Breast epithelium (tissue), 4 donors: ENCODE measurements at regions of chr9 and their contacts with region 1.

Region 1: DNA sequence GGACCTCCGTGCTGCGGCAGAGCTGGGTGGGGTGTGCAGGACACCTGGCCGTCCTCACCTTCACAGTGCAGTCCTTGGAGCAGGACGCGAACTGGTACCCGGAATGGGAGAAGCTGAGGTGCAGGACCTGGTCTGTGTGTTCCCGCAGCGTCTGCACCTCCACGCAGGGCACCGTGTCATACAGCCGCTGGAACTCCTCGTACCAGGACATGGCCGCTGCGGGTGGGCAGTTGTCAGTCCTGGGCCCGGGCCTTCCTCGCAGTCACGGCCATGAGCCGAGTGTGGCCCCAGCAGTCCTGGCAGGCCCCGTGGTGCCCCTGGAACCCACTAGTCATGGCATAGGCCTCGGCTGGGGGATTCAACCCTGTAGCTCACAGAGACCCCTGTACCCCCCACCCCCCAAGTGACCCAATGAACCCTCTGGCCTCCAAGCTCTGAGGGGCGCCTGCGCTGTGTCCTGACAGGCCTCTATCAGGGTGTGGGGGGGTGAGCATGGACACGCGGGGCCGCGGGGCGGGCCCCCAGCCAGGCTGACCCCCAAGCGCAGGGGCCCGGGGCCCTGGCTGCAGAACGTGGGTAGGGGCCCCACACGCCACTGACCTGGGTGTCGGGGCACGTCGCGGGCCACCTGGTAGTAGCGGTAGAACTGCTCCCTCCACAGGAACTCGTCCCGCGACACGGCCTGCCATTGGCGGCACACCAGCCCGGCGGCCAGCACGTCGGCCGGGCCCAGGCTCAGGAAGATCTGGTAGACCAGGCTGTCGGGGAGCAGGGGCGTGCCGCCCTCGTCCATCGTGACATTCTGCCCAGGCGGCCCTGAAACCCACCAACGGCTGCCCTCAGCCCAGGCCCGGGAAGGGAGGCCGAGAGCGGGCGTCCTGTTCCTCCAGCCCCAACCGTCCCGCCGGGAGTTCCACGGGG is 987 bp downstream of the FBXW5 start:
- DNase-seq: no peak
- H3K4me3 ChIP-seq: peak overlapping the region; percentile 62 to 91 (median 85)
- H3K27ac ChIP-seq: peak overlapping the region; percentile 83 to 92
- H3K4me1 ChIP-seq: peaks cover 8 to 10% of the 10 kb centered on the region in 2 donors
- H3K27me3 ChIP-seq: no peaks in the 10 kb centered on the region
- CTCF ChIP-seq: no peak
- POLR2A ChIP-seq: no peak

Region 2: DNA sequence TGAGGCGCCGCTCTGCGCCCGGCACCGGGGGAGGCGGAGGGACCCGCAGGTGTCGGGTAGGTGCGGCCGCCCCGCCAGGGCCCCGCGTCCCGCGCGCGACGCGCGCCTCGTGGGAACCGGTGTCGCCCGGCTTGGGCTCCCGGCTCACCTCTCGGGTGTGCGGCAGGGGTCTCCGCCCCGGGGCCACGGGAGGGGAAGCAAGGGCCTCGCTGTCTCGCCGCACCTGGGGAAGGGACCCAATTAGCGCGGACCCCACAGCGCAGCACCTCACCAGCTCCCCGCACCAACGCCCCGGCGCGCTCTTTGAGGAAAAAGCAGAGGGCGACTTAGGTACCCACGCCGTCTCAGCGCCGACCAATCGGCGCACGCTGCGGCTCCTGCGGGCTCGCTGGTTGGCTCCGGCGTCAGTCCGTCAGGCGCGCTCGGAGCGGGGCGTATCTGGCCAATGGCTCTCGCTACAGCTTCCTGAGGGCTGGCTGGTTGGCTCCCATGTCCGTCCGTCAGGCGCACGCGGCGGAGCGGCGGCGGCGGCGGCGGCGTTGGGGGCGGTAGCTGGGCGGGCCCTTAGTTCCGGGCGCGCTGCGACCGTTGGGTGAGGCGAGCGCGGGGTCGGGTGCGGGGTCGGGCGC is 57.5 kb before region 1 on chr9 and contains the start of gene TRAF2:
- intact Hi-C with region 1: loop called (anchors 2 kb)
- DNase-seq: peak; percentile 97 to 98
- H3K4me3 ChIP-seq: peak within 1 kb of the TSS; percentile 91 to 97 (median 95)
- H3K27ac ChIP-seq: peak within 1 kb of the TSS; percentile 80 to 93
- H3K4me1 ChIP-seq: no peaks in the 10 kb centered on the region
- H3K27me3 ChIP-seq: no peaks in the 10 kb centered on the region
- CTCF ChIP-seq: no peak
- POLR2A ChIP-seq: no peak
- total RNA-seq, gene TRAF2: 3.4 to 8.9 (median 8.5) TPM